ENCODE measurements at regions of chr16 and their contacts with region 1.

Region 1: DNA sequence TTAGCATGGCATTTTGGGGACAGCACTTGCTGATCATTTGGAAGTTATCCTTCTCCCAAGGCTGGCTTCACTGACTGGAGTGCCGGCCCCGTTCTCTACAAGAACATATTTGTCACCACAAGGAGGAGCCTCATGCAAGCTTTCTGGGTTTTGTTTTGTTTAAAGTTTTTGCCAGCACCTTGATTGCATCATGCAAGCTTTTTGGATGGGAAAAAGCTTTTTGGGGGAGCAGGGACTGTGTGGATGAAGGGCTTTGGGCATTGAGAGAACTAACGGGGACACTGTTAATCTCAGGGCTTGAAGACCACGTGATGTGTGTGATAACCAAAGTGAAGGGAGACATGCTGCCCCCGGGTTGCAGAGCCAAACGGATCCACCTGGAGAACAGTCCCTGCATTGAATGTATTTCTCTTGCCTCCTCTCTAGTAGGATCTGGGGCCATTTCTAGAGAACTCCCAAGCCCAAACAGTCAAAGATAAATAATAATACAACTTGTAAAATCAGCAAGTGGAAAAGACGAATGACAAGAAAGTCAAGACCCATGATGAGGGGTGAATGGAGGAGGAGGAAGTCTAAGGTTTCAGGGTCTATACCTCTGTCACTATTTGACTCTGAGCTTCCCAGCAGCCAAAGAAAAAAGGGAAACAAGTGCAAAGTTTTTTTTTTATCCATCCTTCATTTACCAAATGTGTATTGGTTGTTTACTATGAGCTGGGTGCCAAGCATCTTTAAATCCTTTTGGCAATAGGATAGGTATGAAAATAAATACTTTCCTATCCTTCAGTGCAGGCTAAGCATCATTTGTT is 17.2 kb downstream of the TMEM114 start:
- DNase-seq: peak; percentile 46
- H3K4me3 Mint-ChIP-seq: no peak overlapping the region
- H3K27ac Mint-ChIP-seq: peak overlapping the region; percentile 5
- H3K4me1 Mint-ChIP-seq: peaks cover 5% of the 10 kb centered on the region
- H3K27me3 Mint-ChIP-seq: peaks cover 24% of the 10 kb centered on the region
- CTCF ChIP-seq: peak; percentile 51

Region 2: DNA sequence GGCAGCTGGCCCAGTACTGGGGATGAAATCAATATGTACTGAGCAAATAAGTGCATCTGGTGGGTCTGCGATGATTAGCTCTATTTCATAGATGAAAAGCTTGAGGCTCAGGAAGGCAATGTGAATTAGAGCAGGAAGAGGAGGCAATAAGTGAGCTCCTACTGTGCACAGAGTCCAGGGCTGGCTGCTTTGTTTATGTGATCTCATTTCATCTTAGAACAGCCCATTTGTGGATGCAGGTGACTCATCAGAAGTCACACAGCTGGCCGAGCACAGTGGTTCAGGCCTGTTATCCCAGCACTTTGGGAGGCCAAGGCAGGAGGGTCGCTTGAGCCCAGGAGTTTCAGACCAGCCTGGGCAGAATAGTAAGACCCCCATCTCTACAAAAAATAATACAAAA is 10.1 kb after region 1 on chr16:
- CTCF ChIA-PET with region 1: interaction called, 27 read pairs
- POLR2A ChIA-PET with region 1: no interaction called
- intact Hi-C with region 1: no loop called
- DNase-seq: no peak
- H3K4me3 Mint-ChIP-seq: no peak overlapping the region
- H3K27ac Mint-ChIP-seq: no peak overlapping the region
- H3K4me1 Mint-ChIP-seq: no peaks in the 10 kb centered on the region
- H3K27me3 Mint-ChIP-seq: no peaks in the 10 kb centered on the region
- CTCF ChIP-seq: no peak

Region 3: DNA sequence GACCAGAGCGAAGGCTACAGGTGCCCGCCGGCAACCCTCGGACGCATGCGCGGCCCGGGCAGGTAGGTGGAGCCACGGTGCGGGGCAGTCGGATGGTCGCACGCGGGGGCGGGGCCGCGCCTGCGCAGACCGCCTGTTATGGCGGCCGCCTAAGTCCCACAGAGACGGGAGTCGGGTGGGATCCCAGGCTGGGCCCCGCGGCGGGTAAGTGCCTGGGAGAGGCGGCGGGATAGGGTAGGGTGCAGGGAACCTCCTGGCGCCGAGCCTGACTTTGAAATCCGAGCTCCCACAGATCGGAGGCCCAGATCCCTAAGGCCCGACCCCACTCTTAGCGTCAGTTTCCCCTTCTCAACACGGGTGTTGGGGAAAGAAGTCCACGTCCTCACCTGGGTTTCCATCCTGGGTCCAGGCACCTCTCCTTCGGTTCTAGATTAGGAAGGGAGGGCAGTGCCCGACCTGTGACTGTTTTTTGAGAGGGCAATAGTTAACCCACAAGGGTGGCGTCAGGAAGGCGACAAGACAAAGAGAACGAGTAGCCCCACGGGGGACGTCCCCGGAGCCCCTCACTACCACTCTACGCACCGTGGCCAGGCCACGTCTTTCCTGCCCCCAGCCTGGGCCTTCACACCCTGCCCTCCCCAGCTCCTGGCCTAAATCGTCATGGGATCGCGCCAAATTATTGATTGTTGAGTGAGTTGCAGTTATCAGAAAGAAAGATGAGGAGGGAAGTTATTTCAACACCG is 48.6 kb after region 1 on chr16 and contains the start of gene METTL22:
- CTCF ChIA-PET with region 1: interaction called, 19 read pairs
- POLR2A ChIA-PET with region 1: interaction called, 6 read pairs
- intact Hi-C with region 1: loop called (anchors 5 kb)
- DNase-seq: peak; percentile 84
- H3K4me3 Mint-ChIP-seq: peak within 1 kb of the TSS; percentile 84
- H3K27ac Mint-ChIP-seq: peak within 1 kb of the TSS; percentile 92
- H3K4me1 Mint-ChIP-seq: peaks cover 11% of the 10 kb centered on the region
- H3K27me3 Mint-ChIP-seq: no peaks in the 10 kb centered on the region
- CTCF ChIP-seq: no peak
- total RNA-seq, gene METTL22: 36.7 and 47.2 TPM in 2 replicates

Region 4: GRCh38 chr16:8655184-8655717 is 82.1 kb after region 1 on chr16:
- CTCF ChIA-PET with region 1: interaction called, 60 read pairs
- POLR2A ChIA-PET with region 1: interaction called, 3 read pairs
- intact Hi-C with region 1: no loop called
- DNase-seq: peak; percentile 66
- H3K4me3 Mint-ChIP-seq: no peak overlapping the region
- H3K27ac Mint-ChIP-seq: no peak overlapping the region
- H3K4me1 Mint-ChIP-seq: no peaks in the 10 kb centered on the region
- H3K27me3 Mint-ChIP-seq: no peaks in the 10 kb centered on the region
- CTCF ChIP-seq: peak; percentile 36

Region 5: GRCh38 chr16:8797364-8798173 is 224.4 kb after region 1 on chr16 and contains the starts of genes PMM2 and TMEM186:
- CTCF ChIA-PET with region 1: interaction called, 17 read pairs
- POLR2A ChIA-PET with region 1: no interaction called
- intact Hi-C with region 1: no loop called
- DNase-seq: peak; percentile 96
- H3K4me3 Mint-ChIP-seq: peak within 1 kb of the TSS; percentile 92
- H3K27ac Mint-ChIP-seq: peak within 1 kb of the TSS; percentile 97
- H3K4me1 Mint-ChIP-seq: peaks cover 9% of the 10 kb centered on the region
- H3K27me3 Mint-ChIP-seq: no peaks in the 10 kb centered on the region
- CTCF ChIP-seq: no peak
- total RNA-seq, gene PMM2: 59.4 and 60.6 TPM in 2 replicates
- total RNA-seq, gene TMEM186: 12.9 and 13.9 TPM in 2 replicates

Measured in MCF 10A (cell line).